Activated CD8-positive, alpha-beta T cell treated with anti-CD3 and anti-CD28 coated beads for 36 hours (primary cell): ENCODE measurements at regions of chr2 and their contacts with region 1.

Region 1: GRCh38 chr2:38568724-38569436 is 33.8 kb downstream of the HNRNPLL start:
- DNase-seq: no peak
- ATAC-seq: no peak
- H3K4me3 Mint-ChIP-seq: no peak overlapping the region
- H3K27ac Mint-ChIP-seq: no peak overlapping the region
- H3K4me1 Mint-ChIP-seq: peaks cover 10% of the 10 kb centered on the region
- H3K27me3 Mint-ChIP-seq: no peaks in the 10 kb centered on the region
- CTCF ChIP-seq: no peak

Region 2: GRCh38 chr2:38554973-38555595 is 13.8 kb before region 1 on chr2:
- CTCF ChIA-PET with region 1: interaction called, 17 read pairs
- POLR2A ChIA-PET with region 1: no interaction called
- intact Hi-C with region 1: no loop called
- DNase-seq: no peak
- ATAC-seq: no peak
- H3K4me3 Mint-ChIP-seq: no peak overlapping the region
- H3K27ac Mint-ChIP-seq: no peak overlapping the region
- H3K4me1 Mint-ChIP-seq: peaks cover 19% of the 10 kb centered on the region
- H3K27me3 Mint-ChIP-seq: no peaks in the 10 kb centered on the region
- CTCF ChIP-seq: peak; percentile 40